Activated B cell treated with CpG ODN at 0.5 μM for 24 hours (primary cell): ENCODE measurements at regions of chr4 and their contacts with region 1.

Region 1: DNA sequence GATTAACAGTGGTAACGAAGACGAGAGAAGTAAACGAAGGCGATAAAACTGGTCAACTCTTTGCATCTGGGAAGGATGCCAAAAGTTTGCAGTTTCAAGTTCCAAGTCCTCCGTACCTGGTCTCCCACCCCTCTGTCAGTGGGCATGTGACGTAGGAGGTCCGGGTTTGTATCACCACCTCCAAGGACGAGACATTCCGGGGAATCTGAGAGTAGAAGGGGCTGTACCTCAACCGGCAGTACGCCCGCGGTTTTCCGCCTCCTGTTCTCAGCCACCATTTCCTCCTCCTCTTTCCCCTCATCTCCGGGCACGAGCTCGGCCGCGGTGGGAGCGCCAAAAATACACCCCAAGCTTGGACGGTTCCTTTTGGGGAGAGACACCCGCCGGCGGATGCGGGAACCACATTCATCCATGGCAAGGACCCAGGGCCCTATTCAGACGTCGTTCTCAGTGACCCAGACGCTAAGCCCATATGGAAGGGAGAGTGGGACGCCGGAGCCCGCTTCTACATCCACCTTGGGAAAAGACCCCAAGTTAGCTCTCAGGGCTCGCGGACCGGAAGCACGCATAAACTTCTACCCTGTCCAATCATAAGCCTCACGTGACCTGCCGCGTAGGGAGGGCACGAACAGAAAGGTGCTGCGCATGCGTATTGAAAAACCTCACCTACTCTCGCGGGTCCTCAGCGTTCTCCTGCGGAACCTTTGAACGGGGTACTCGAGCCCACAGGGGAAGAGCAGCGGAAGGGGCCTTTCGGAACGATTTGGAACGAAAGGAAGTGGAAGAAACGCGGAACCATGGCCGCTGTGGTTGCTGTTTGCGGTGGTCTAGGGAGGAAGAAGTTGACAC is at the starts of genes HELQ and MRPS18C:
- DNase-seq: peak; percentile 82
- ATAC-seq: peak; percentile 92
- H3K4me3 Mint-ChIP-seq: peak within 1 kb of the TSS; percentile 99
- H3K27ac Mint-ChIP-seq: peak within 1 kb of the TSS; percentile 99
- H3K4me1 Mint-ChIP-seq: peaks cover 55% of the 10 kb centered on the region
- H3K27me3 Mint-ChIP-seq: no peaks in the 10 kb centered on the region
- CTCF ChIP-seq: no peak
- total RNA-seq, gene HELQ: 31.9 and 32.9 TPM in 2 replicates
- total RNA-seq, gene MRPS18C: 56.0 and 56.5 TPM in 2 replicates

Region 2: DNA sequence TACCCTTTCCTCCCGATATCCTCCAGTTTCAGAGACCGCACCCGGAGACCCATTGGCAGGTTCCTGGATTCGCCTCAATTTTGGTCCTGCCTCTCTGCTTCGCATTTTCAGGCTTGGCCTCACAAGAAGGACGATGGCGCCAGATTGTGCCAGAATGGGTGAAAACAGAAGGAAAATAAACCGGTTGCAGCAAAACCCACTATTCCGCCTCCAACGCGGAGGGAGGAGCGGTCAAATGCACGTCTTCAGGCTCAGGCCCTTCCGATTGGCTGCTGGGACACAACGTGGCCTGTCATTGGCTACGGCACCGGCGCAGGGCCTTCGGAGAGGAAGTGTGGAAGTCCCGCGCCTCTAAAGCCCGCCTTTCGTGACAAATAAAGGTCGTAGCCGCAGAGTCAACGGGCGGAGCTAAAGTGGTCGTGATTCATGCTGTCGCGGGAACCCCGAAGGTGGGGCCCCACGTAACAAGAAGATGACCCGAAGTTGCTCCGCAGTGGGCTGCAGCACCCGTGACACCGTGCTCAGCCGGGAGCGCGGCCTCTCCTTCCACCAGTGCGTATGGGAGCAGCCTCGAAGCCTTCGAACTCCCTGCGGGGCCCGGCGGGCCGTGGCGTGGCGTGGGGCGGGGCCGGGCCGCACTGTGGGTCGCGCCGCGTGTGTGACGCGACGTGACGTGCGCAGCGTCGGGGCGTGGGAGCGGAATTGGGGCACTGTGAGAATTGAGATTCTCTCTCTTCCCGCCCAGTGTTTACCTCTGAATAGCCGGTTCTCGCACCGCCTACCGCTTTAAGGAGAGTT is 555.0 kb before region 1 on chr4 and contains the start of gene THAP9:
- CTCF ChIA-PET with region 1: no interaction called
- POLR2A ChIA-PET with region 1: interaction called, 4 read pairs
- intact Hi-C with region 1: loop called (anchors 2 kb)
- DNase-seq: peak; percentile 92
- ATAC-seq: peak; percentile 90
- H3K4me3 Mint-ChIP-seq: no peak within 1 kb of the TSS
- H3K27ac Mint-ChIP-seq: no peak within 1 kb of the TSS
- H3K4me1 Mint-ChIP-seq: peaks cover 20% of the 10 kb centered on the region
- H3K27me3 Mint-ChIP-seq: no peaks in the 10 kb centered on the region
- CTCF ChIP-seq: no peak
- total RNA-seq, gene THAP9: 2.1 and 3.1 TPM in 2 replicates

Region 3: GRCh38 chr4:83362492-83363329 is 92.8 kb before region 1 on chr4:
- CTCF ChIA-PET with region 1: interaction called, 4 read pairs
- POLR2A ChIA-PET with region 1: interaction called, 4 read pairs
- intact Hi-C with region 1: loop called (anchors 5 kb)
- DNase-seq: no peak
- ATAC-seq: peak; percentile 52
- H3K4me3 Mint-ChIP-seq: no peak overlapping the region
- H3K27ac Mint-ChIP-seq: no peak overlapping the region
- H3K4me1 Mint-ChIP-seq: no peaks in the 10 kb centered on the region
- H3K27me3 Mint-ChIP-seq: no peaks in the 10 kb centered on the region
- CTCF ChIP-seq: no peak

Region 4: DNA sequence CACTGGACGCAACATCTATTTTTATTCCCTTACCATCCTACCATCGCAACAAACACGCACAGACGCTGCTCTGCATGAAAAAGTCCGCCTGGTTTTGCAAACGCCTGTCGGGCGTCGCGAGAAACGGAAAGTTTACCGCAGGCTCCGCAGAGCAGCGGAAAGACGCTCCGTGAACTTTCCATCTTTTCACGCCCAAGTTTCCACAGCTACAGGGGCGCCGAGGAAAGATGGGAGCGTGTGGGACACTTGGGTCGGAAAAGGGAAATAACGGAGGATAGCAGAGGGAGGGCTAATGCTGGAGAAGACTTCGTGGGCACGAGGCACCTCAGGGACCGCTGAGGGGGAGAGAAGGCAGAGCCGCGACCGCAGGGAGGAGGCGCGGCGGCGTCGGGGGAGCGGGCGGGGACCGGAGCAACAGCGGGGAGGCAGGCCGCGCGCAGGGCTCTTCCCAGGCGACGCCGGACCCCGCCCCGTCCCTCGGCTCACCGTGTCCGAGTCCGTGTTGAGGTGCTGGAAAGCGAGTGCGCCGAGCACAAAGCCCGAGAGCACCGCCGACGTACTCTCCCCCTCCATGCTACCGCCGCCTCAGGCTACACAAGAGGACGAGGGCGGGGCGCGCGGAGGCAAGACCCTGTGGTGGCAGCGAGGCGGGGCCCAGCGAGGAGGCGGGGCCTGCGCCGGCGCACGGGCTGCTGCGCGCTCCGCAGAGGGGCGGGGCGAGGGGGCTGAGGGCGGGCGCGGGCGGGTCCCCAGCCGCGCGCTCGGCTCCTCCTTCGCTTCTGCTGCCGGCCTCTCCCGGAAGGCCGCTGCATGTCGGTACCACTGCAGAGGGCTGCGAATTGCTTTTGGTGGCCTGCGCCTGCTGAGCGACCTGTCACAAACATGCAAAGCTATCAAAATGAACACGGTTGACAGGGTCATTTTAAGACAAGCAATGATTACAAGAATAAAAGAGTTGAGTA is 29.3 kb after region 1 on chr4 and contains the start of gene ABRAXAS1:
- CTCF ChIA-PET with region 1: no interaction called
- POLR2A ChIA-PET with region 1: interaction called, 29 read pairs
- intact Hi-C with region 1: loop called (anchors 1 kb)
- DNase-seq: peak; percentile 96
- ATAC-seq: peak; percentile 97
- H3K4me3 Mint-ChIP-seq: peak within 1 kb of the TSS; percentile 93
- H3K27ac Mint-ChIP-seq: peak within 1 kb of the TSS; percentile 94
- H3K4me1 Mint-ChIP-seq: peaks cover 19% of the 10 kb centered on the region
- H3K27me3 Mint-ChIP-seq: no peaks in the 10 kb centered on the region
- CTCF ChIP-seq: no peak
- total RNA-seq, gene ABRAXAS1: 23.5 and 24.2 TPM in 2 replicates